HEK293 (cell line): ENCODE measurements at regions of chr6 and their contacts with region 1.

Region 1: GRCh38 chr6:26342106-26343004 is 22.6 kb upstream of the BTN3A2 start:
- H3K4me3 ChIP-seq: 0 out of 2 replicates have a peak overlapping the region, but pooled peaks have one; percentile 13
- H3K27ac ChIP-seq: no peak overlapping the region
- H3K4me1 ChIP-seq: no peaks in the 10 kb centered on the region
- CTCF ChIP-seq: no peak

Region 2: GRCh38 chr6:26270903-26271667 is 71.3 kb before region 1 on chr6:
- CTCF ChIA-PET with region 1: no interaction called
- POLR2A ChIA-PET with region 1: no interaction called
- H3K4me3 ChIP-seq: no peak overlapping the region
- H3K27ac ChIP-seq: no peak overlapping the region
- H3K4me1 ChIP-seq: peaks cover 3% of the 10 kb centered on the region; the same call in 1 of the 2 replicates
- CTCF ChIP-seq: no peak

Region 3: DNA sequence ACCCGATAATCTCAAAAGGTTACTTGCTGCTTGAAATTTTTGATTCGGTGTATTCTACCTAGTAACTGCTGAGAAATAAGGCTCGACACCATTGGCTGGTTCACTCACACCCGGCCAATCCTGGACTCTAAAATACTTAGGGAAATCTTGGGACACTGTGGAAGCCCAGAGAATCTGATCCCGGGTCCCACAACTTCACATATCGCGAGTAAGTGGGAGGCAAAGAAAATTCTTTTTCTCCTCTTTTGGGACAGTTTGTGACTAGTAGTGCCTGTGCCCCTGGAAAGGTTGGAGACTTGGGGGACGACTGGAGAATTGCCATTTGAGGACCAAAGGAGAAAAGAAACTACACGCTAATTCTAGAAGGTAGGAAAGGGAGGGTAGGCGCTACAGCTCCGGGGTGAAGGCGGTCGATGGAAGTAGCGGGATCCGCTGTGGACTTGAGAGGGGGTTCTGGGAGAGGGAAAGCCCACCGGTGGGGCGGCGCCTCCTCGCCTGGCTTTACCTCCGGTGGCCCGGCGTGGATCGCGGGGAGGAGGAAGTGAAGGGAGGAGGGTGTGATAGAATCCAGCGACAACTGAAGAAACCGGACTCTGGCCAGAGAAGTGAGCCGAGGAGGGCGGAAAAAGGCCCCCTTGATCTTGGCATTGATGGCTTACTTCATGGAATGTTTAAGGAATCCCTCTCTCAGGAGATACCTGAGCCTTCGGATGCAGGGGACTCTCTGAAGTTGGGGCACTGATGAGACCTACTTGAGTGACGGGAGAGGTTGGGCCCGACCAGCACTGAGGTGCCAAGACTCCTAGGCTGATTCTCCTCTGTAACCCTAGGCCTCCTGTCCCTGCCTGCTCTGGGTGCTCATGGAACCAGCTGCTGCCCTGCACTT is 79.1 kb after region 1 on chr6:
- CTCF ChIA-PET with region 1: interaction called, 25 read pairs
- POLR2A ChIA-PET with region 1: no interaction called
- H3K4me3 ChIP-seq: peak overlapping the region; percentile 80
- H3K27ac ChIP-seq: peak overlapping the region; percentile 63; the same call in 1 of the 2 replicates
- H3K4me1 ChIP-seq: no peaks in the 10 kb centered on the region
- CTCF ChIP-seq: no peak

Region 4: DNA sequence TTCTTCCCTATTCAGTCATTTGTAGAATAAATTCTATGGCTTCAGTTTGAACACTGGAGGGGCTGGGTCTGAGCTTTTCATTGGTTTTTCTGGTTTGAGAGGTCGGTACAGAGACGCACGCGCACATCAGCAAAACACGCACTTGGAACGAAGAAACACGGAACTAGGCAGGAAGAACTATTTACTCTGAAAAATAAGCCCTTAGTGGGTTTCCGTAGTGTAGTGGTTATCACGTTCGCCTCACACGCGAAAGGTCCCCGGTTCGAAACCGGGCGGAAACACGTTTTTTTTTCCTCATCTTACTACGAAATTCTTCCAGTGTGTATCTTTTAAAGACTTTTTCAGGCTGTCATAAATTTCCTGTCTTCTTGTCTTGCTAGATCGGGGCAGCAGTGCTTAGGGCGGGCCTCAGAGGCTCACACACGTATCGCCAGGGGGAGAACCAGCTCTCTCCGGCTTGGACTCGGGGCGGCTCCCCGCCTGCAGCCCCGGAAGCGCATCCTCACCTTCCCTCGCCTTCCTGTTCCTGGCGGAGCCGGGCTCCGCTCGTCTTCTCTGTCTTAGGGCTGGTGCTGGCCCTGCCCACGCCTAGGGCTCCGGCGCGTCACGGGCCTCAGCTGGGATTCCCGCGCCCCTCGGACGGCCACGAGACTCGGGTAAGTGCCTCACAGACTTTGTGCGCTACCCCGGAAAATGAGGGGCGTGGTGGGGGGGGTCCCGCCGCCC is 195.7 kb after region 1 on chr6 and contains the start of gene HMGN4:
- CTCF ChIA-PET with region 1: interaction called, 6 read pairs
- POLR2A ChIA-PET with region 1: interaction called, 11 read pairs
- H3K4me3 ChIP-seq: peak within 1 kb of the TSS; percentile 76
- H3K27ac ChIP-seq: peak within 1 kb of the TSS; percentile 79
- H3K4me1 ChIP-seq: peaks cover 5% of the 10 kb centered on the region; the same call in 1 of the 2 replicates
- CTCF ChIP-seq: peak; percentile 65; the same call in 1 of the 2 replicates

Region 5: GRCh38 chr6:26553635-26554446 is 211.5 kb after region 1 on chr6:
- CTCF ChIA-PET with region 1: interaction called, 14 read pairs
- POLR2A ChIA-PET with region 1: interaction called, 7 read pairs
- H3K4me3 ChIP-seq: peak overlapping the region; percentile 71
- H3K27ac ChIP-seq: peak overlapping the region; percentile 60
- H3K4me1 ChIP-seq: no peaks in the 10 kb centered on the region
- CTCF ChIP-seq: no peak

Region 6: GRCh38 chr6:26596579-26597388 is 254.4 kb after region 1 on chr6 and contains the start of gene ABT1:
- CTCF ChIA-PET with region 1: interaction called, 48 read pairs
- POLR2A ChIA-PET with region 1: interaction called, 10 read pairs
- H3K4me3 ChIP-seq: peak within 1 kb of the TSS; percentile 82
- H3K27ac ChIP-seq: peak within 1 kb of the TSS; percentile 48
- H3K4me1 ChIP-seq: peaks cover 4% of the 10 kb centered on the region; the same call in 1 of the 2 replicates
- CTCF ChIP-seq: no peak